AG04449 (cell line): ENCODE measurements at regions of chr14 and their contacts with region 1.

Region 1: GRCh38 chr14:101964297-101965144 is at the start of gene DYNC1H1:
- DNase-seq: no peak
- H3K4me3 ChIP-seq: peak within 1 kb of the TSS; percentile 94
- CTCF ChIP-seq: no peak

Region 2: DNA sequence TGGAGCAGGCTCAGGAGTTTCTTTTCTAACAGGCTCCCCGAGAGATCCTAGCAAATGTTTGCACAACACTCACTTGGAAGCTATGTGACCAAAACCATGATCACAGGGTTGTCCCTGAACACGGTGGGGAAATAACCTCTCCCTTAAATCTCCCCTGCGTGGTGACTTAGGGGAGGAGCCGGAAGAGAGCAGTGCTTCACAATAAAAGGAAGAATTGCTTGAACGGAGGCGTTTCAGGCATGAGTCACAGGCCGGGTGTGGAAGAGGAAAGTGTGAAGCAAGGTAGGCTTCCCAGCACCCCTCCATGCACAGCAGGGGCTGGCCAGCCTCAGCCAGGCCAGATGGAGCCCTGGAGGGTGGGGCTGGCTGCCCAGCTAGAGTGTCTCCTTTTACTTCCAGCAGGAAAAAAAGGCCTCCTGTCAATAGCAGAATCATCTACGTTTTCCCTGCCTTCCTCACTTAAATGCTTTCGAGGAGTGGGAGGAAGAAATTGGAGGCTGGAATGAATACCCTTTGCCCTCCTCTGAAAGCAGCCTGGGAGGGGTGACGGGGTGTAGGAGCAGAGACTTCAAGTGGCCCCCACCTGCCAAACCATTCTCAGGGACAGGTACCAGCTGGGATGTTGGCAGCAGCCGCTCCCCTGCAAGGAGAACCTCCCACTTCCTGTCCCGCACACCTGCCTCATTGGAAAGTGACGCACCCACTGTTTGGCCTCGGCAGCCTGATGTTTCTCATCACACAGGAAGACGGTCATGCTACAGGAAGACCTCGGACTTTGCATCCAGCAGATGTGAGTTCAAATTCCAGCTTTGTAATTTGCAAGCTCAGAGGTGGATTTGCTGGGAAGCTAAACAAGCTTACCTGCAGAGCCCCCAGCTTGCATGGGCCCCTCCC is 233.1 kb before region 1 on chr14:
- CTCF ChIA-PET with region 1: no interaction called
- POLR2A ChIA-PET with region 1: no interaction called
- DNase-seq: peak; percentile 9
- H3K4me3 ChIP-seq: no peak overlapping the region
- CTCF ChIP-seq: no peak

Region 3: GRCh38 chr14:101980251-101981099 is 16.0 kb after region 1 on chr14:
- CTCF ChIA-PET with region 1: interaction called, 37 read pairs
- POLR2A ChIA-PET with region 1: interaction called, 3 read pairs
- DNase-seq: peak; percentile 98
- H3K4me3 ChIP-seq: no peak overlapping the region
- CTCF ChIP-seq: no peak

Region 4: GRCh38 chr14:102028421-102029172 is 64.1 kb after region 1 on chr14:
- CTCF ChIA-PET with region 1: interaction called, 37 read pairs
- POLR2A ChIA-PET with region 1: no interaction called
- DNase-seq: peak; percentile 58
- H3K4me3 ChIP-seq: no peak overlapping the region
- CTCF ChIP-seq: no peak

Region 5: GRCh38 chr14:102055216-102055918 is 90.8 kb after region 1 on chr14:
- CTCF ChIA-PET with region 1: interaction called, 16 read pairs
- POLR2A ChIA-PET with region 1: no interaction called
- DNase-seq: peak; percentile 33
- H3K4me3 ChIP-seq: no peak overlapping the region
- CTCF ChIP-seq: no peak

Region 6: GRCh38 chr14:102096214-102097114 is 131.9 kb after region 1 on chr14:
- CTCF ChIA-PET with region 1: interaction called, 119 read pairs
- POLR2A ChIA-PET with region 1: no interaction called
- DNase-seq: no peak
- H3K4me3 ChIP-seq: no peak overlapping the region; the same call in 1 of the 2 replicates
- CTCF ChIP-seq: peak; percentile 76